IMR-90 (cell line): ENCODE measurements at regions of chr4 and their contacts with region 1.

Region 1: GRCh38 chr4:163166041-163166579 is 580 bp downstream of the NAF1 start:
- DNase-seq: peak; percentile 33
- ATAC-seq: peak; percentile 56
- H3K4me3 ChIP-seq: peak overlapping the region; percentile 74
- H3K27ac ChIP-seq: peak overlapping the region; percentile 68
- H3K4me1 ChIP-seq: no peaks in the 10 kb centered on the region; the same call in 1 of the 2 replicates
- H3K27me3 ChIP-seq: no peaks in the 10 kb centered on the region
- CTCF ChIP-seq: no peak
- POLR2A ChIP-seq: peak; percentile 71; the same call in 1 of the 2 replicates
- RAD21 ChIP-seq: no peak

Region 2: GRCh38 chr4:162830904-162831303 is 335.2 kb before region 1 on chr4:
- CTCF ChIA-PET with region 1: no interaction called
- POLR2A ChIA-PET with region 1: no interaction called
- dilution Hi-C with region 1: no loop called
- in situ Hi-C with region 1: no loop called
- intact Hi-C with region 1: no loop called
- DNase-seq: no peak
- ATAC-seq: no peak
- H3K4me3 ChIP-seq: no peak overlapping the region
- H3K27ac ChIP-seq: no peak overlapping the region
- H3K4me1 ChIP-seq: no peaks in the 10 kb centered on the region
- H3K27me3 ChIP-seq: no peaks in the 10 kb centered on the region
- CTCF ChIP-seq: no peak
- POLR2A ChIP-seq: no peak
- RAD21 ChIP-seq: no peak

Region 3: DNA sequence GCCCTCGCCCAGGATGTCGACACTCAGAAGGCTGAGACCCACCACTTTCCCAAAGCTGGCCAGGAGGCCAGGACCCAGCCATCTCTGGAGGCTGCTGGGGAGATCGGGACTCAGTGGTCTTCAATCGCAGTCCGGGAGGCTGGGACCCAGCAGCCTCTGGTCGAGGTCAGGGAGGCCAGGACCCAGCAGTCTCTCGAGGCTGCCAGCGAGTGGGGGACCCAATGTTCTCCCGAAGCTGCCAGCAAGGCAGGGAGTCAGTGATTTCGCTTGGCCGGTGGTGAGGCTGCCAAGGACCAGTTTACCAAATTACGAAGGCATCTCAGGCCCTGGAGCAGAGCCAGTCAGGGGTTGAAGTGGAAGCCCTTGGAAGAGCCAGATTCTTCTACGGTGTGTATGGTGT is 181.0 kb before region 1 on chr4:
- CTCF ChIA-PET with region 1: no interaction called
- POLR2A ChIA-PET with region 1: no interaction called
- dilution Hi-C with region 1: no loop called
- in situ Hi-C with region 1: no loop called
- intact Hi-C with region 1: no loop called
- DNase-seq: no peak
- ATAC-seq: no peak
- H3K4me3 ChIP-seq: no peak overlapping the region
- H3K27ac ChIP-seq: no peak overlapping the region
- H3K4me1 ChIP-seq: no peaks in the 10 kb centered on the region
- H3K27me3 ChIP-seq: no peaks in the 10 kb centered on the region
- CTCF ChIP-seq: no peak
- POLR2A ChIP-seq: no peak
- RAD21 ChIP-seq: no peak

Region 4: DNA sequence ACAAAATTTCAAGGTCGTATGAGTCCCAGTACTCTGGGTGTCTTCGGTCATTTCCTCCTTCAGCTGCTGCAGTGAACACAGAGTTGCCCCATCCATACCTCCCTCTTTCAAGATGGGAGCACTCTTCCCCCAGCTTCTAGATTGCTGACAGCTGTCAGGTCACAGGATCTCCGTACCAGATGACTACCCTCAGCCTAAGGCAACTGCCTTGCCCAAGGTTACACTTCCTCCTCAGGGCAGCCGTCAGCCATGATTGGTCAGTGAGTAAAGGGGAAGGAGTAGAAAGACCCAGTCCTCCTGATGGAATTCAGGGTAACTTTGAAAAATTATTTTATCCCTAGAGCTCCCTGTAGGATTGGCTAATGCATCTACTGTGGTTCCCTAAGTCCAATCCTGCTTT is 81.0 kb before region 1 on chr4:
- CTCF ChIA-PET with region 1: no interaction called
- POLR2A ChIA-PET with region 1: no interaction called
- dilution Hi-C with region 1: no loop called
- in situ Hi-C with region 1: no loop called
- intact Hi-C with region 1: no loop called
- DNase-seq: no peak
- ATAC-seq: no peak
- H3K4me3 ChIP-seq: no peak overlapping the region
- H3K27ac ChIP-seq: no peak overlapping the region
- H3K4me1 ChIP-seq: no peaks in the 10 kb centered on the region
- H3K27me3 ChIP-seq: no peaks in the 10 kb centered on the region
- CTCF ChIP-seq: no peak
- POLR2A ChIP-seq: no peak
- RAD21 ChIP-seq: no peak

Region 5: GRCh38 chr4:163121689-163122088 is 44.4 kb before region 1 on chr4:
- CTCF ChIA-PET with region 1: no interaction called
- POLR2A ChIA-PET with region 1: no interaction called
- dilution Hi-C with region 1: no loop called
- in situ Hi-C with region 1: no loop called
- intact Hi-C with region 1: loop called (anchors 5 kb)
- DNase-seq: peak; percentile 77
- ATAC-seq: peak; percentile 91
- H3K4me3 ChIP-seq: no peak overlapping the region
- H3K27ac ChIP-seq: no peak overlapping the region
- H3K4me1 ChIP-seq: peaks cover 4% of the 10 kb centered on the region; the same call in 1 of the 2 replicates
- H3K27me3 ChIP-seq: no peaks in the 10 kb centered on the region
- CTCF ChIP-seq: no peak
- POLR2A ChIP-seq: no peak
- RAD21 ChIP-seq: no peak

Region 6: DNA sequence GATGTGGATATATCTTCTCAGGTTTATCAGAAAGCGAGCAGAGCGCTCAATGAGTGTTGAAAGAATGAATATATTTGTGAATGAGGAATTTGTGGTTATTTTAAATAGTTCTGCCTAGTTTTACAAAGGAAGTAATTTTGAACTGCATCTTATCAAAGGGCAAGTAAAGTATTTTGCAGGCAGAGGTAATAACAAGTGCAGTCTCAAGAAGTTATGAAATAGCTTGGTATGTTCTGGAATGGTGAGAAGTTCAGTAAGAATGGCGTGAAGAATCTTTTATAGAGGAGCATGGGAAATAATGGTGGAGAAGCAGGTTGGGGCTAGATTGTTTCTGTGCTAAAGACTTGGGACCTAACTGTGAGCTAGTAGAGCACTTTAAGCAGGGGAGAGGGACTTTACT is 339.3 kb after region 1 on chr4:
- CTCF ChIA-PET with region 1: no interaction called
- POLR2A ChIA-PET with region 1: no interaction called
- dilution Hi-C with region 1: no loop called
- in situ Hi-C with region 1: loop called (anchors 25 kb)
- intact Hi-C with region 1: no loop called
- DNase-seq: no peak
- ATAC-seq: no peak
- H3K4me3 ChIP-seq: no peak overlapping the region
- H3K27ac ChIP-seq: no peak overlapping the region
- H3K4me1 ChIP-seq: peaks cover 3% of the 10 kb centered on the region
- H3K27me3 ChIP-seq: no peaks in the 10 kb centered on the region
- CTCF ChIP-seq: no peak
- POLR2A ChIP-seq: no peak
- RAD21 ChIP-seq: no peak